ENCODE measurements at regions of chr7 and their contacts with region 1.

Region 1: GRCh38 chr7:149742075-149742701 is 31.2 kb downstream of the ZNF467 start:
- DNase-seq: peak; percentile 48
- H3K4me3 Mint-ChIP-seq: peak overlapping the region; percentile 71
- H3K27ac Mint-ChIP-seq: no peak overlapping the region
- H3K4me1 Mint-ChIP-seq: peaks cover 11% of the 10 kb centered on the region
- H3K27me3 Mint-ChIP-seq: peaks cover 44% of the 10 kb centered on the region

Region 2: GRCh38 chr7:149598721-149599306 is 143.4 kb before region 1 on chr7:
- intact Hi-C with region 1: no loop called
- DNase-seq: no peak
- H3K4me3 Mint-ChIP-seq: no peak overlapping the region
- H3K27ac Mint-ChIP-seq: no peak overlapping the region
- H3K4me1 Mint-ChIP-seq: peaks cover 28% of the 10 kb centered on the region
- H3K27me3 Mint-ChIP-seq: no peaks in the 10 kb centered on the region

Region 3: GRCh38 chr7:149662591-149663095 is 79.5 kb before region 1 on chr7:
- intact Hi-C with region 1: loop called (anchors 1 kb)
- DNase-seq: peak; percentile 59
- H3K4me3 Mint-ChIP-seq: no peak overlapping the region
- H3K27ac Mint-ChIP-seq: no peak overlapping the region
- H3K4me1 Mint-ChIP-seq: no peaks in the 10 kb centered on the region
- H3K27me3 Mint-ChIP-seq: peaks cover 43% of the 10 kb centered on the region

Region 4: DNA sequence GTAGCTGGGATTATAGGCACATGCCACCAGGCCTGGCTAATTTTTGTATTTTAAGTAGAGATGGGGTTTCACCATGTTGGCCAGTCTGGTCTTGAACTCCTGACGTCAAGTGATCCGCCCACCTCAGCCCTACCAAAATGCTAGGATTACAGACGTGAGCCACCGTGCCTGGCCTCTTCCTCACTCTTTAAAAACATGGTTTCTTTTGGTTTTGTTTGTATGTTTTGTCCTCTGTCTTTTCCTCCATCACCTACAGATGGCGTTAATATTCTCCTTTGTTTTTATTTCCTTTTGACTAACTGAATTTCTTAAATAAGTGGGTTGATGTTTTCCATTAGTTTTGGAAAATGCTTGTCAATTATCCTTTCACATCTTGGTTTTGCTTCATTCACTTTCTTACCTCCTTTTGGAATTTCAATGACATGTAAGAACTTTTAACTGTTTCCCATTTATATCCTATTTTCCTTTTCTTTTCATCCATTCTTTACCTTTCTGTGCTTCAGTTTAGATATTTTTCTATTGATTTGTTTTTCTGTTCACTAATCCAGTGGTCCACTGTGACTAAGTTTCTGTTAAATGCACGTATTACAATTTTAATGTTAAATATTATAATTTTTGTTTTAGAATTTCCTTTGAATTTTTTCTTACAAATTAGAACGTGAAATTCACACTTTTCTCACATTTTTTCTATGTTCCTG is 72.9 kb before region 1 on chr7:
- intact Hi-C with region 1: loop called (anchors 1 kb)
- DNase-seq: no peak
- H3K4me3 Mint-ChIP-seq: no peak overlapping the region
- H3K27ac Mint-ChIP-seq: no peak overlapping the region
- H3K4me1 Mint-ChIP-seq: peaks cover 4% of the 10 kb centered on the region
- H3K27me3 Mint-ChIP-seq: peaks cover 57% of the 10 kb centered on the region

Region 5: DNA sequence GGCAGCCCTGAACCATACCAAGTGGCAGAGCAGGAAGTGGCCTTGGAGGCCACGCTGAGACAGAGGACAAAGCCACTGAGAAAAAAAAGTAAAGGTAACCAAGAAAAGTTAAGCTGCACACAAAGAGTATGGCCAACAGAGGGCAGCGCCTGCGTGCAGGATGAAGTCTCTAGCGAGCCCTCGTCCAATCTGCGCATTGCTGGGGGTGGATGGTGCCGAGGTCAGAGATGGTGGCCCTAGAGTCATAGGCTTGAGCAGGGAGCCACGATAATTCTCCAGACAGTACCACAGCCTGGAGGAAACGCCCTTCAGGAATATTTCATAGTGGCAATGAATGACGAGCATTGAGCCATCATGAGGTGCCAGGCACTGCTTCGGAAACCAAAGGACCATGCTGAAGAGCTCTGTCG is 141.3 kb after region 1 on chr7:
- intact Hi-C with region 1: no loop called
- DNase-seq: peak; percentile 48
- H3K4me3 Mint-ChIP-seq: no peak overlapping the region
- H3K27ac Mint-ChIP-seq: peak overlapping the region; percentile 24
- H3K4me1 Mint-ChIP-seq: peaks cover 7% of the 10 kb centered on the region
- H3K27me3 Mint-ChIP-seq: no peaks in the 10 kb centered on the region